ENCODE measurements at regions of chr7 and their contacts with region 1.

Region 1: GRCh38 chr7:36318116-36318515 is 71.5 kb upstream of the ANLN start:
- DNase-seq: no peak
- H3K4me3 ChIP-seq: no peak overlapping the region
- H3K27ac ChIP-seq: no peak overlapping the region
- H3K4me1 ChIP-seq: peaks cover 0 to 10% of the 10 kb centered on the region in 2 experiments; a peak in 1 of 4 replicates
- H3K27me3 ChIP-seq: no peaks in the 10 kb centered on the region
- CTCF ChIP-seq: no peak
- EP300 ChIP-seq: no peak
- RAD21 ChIP-seq: no peak

Region 2: DNA sequence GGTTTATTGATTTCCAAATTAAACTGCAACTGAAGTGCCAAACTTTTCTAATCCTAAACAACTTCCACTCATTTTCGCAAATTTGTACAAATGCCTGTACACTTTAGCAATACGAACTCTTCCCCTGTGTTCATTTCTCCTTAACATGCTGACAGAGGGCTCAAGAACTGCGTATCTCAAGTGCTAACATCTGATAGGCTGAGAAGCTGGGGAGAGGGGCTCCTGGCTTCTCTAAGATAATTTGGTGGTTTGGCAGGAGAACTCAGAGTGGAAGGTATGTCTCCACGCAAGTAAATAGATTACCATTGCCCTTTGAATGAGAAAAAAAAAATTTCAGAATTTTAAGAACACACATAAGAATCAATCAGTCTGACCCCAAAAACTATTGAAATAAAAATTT is 18.3 kb after region 1 on chr7:
- CTCF ChIA-PET with region 1: interaction called, 36 read pairs
- POLR2A ChIA-PET with region 1: no interaction called
- DNase-seq: no peak
- H3K4me3 ChIP-seq: no peak overlapping the region
- H3K27ac ChIP-seq: no peak overlapping the region
- H3K4me1 ChIP-seq: no peaks in the 10 kb centered on the region
- H3K27me3 ChIP-seq: no peaks in the 10 kb centered on the region
- CTCF ChIP-seq: no peak
- EP300 ChIP-seq: no peak
- RAD21 ChIP-seq: no peak

Region 3: GRCh38 chr7:36344622-36345021 is 26.5 kb after region 1 on chr7:
- CTCF ChIA-PET with region 1: interaction called, 21 read pairs
- POLR2A ChIA-PET with region 1: no interaction called
- DNase-seq: no peak
- H3K4me3 ChIP-seq: no peak overlapping the region
- H3K27ac ChIP-seq: no peak overlapping the region
- H3K4me1 ChIP-seq: peaks cover 0 to 4% of the 10 kb centered on the region in 2 experiments; a peak in 1 of 4 replicates
- H3K27me3 ChIP-seq: no peaks in the 10 kb centered on the region
- CTCF ChIP-seq: no peak
- EP300 ChIP-seq: no peak
- RAD21 ChIP-seq: no peak

Region 4: GRCh38 chr7:36357054-36357453 is 38.9 kb after region 1 on chr7:
- CTCF ChIA-PET with region 1: interaction called, 13 read pairs
- POLR2A ChIA-PET with region 1: no interaction called
- DNase-seq: no peak
- H3K4me3 ChIP-seq: no peak overlapping the region
- H3K27ac ChIP-seq: no peak overlapping the region
- H3K4me1 ChIP-seq: peaks cover 0 to 7% of the 10 kb centered on the region in 2 experiments; a peak in 2 of 4 replicates
- H3K27me3 ChIP-seq: no peaks in the 10 kb centered on the region
- CTCF ChIP-seq: no peak
- EP300 ChIP-seq: no peak
- RAD21 ChIP-seq: no peak

Region 5: DNA sequence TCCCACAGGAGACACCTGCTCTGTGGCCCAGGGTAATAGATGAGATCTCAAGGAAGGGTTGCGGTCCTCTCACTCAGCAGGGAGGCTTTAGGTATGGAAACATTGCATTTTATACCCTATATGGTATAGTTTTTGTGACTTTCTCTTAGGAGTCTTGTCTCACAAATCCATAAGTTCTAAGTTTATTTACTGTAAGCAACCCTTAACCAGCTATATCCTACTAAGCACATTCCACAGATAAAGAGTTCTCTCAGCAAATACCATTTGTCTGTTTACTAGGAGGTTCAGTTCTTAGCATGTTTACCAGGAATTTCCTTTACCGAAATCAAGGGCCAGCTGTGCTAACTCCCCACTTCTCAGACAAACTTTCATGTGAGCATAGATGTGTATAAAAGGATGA is 138.4 kb after region 1 on chr7:
- CTCF ChIA-PET with region 1: no interaction called
- POLR2A ChIA-PET with region 1: no interaction called
- DNase-seq: no peak
- H3K4me3 ChIP-seq: no peak overlapping the region
- H3K27ac ChIP-seq: no peak overlapping the region
- H3K4me1 ChIP-seq: no peaks in the 10 kb centered on the region
- H3K27me3 ChIP-seq: no peaks in the 10 kb centered on the region
- CTCF ChIP-seq: no peak
- EP300 ChIP-seq: no peak
- RAD21 ChIP-seq: no peak